MCF 10A (cell line): ENCODE measurements at regions of chr1 and their contacts with region 1.

Region 1: DNA sequence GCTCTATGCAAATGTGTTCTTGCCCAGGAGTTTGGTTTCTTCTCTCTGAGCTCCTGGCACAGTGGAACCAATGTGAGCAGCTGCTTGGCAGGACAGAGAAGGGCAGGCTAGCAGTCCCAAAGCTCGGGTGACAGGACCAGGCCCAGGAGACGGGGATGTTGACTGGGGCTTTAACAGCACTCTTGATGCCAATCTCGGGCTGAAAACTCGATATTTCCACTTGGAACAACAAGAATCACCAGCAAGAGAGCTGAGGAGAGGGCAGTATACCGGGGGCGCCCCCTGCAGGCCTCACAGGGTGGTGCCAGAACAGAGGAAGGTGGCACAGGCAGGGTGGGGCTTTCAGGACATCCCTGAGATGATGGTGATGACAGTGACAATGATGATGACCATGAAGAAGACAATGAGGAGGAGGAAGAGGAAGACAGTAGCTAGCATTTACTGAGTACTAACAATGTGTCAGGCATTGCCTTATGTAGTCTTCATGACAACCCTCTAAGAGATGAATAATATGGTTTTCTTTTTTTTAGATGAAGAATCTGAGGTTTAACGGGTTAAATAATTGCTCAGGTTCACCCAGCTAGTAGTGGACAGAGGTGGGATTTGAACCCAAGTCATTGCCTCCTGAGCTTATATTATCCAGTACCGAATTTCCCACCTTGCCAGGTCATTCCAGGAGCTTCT is 2.7 kb upstream of the KCNJ9 start:
- DNase-seq: peak; percentile 67
- H3K4me3 Mint-ChIP-seq: no peak overlapping the region
- H3K27ac Mint-ChIP-seq: no peak overlapping the region
- H3K4me1 Mint-ChIP-seq: no peaks in the 10 kb centered on the region
- H3K27me3 Mint-ChIP-seq: peaks cover 64% of the 10 kb centered on the region
- CTCF ChIP-seq: peak; percentile 98

Region 2: GRCh38 chr1:159945483-159946241 is 133.0 kb before region 1 on chr1 and contains the start of gene IGSF9:
- CTCF ChIA-PET with region 1: interaction called, 19 read pairs
- POLR2A ChIA-PET with region 1: no interaction called
- intact Hi-C with region 1: no loop called
- DNase-seq: peak; percentile 86
- H3K4me3 Mint-ChIP-seq: peak within 1 kb of the TSS; percentile 69
- H3K27ac Mint-ChIP-seq: no peak within 1 kb of the TSS
- H3K4me1 Mint-ChIP-seq: peaks cover 45% of the 10 kb centered on the region
- H3K27me3 Mint-ChIP-seq: no peaks in the 10 kb centered on the region
- CTCF ChIP-seq: peak; percentile 37
- total RNA-seq, gene IGSF9: 0.25 and 0.44 TPM in 2 replicates

Region 3: GRCh38 chr1:159953536-159954515 is 124.8 kb before region 1 on chr1 and contains the start of gene SLAMF9:
- CTCF ChIA-PET with region 1: interaction called, 11 read pairs
- POLR2A ChIA-PET with region 1: no interaction called
- intact Hi-C with region 1: no loop called
- DNase-seq: peak; percentile 23
- H3K4me3 Mint-ChIP-seq: no peak within 1 kb of the TSS
- H3K27ac Mint-ChIP-seq: no peak within 1 kb of the TSS
- H3K4me1 Mint-ChIP-seq: peaks cover 25% of the 10 kb centered on the region
- H3K27me3 Mint-ChIP-seq: no peaks in the 10 kb centered on the region
- CTCF ChIP-seq: no peak
- total RNA-seq, gene SLAMF9: not detected in 2 replicates

Region 4: DNA sequence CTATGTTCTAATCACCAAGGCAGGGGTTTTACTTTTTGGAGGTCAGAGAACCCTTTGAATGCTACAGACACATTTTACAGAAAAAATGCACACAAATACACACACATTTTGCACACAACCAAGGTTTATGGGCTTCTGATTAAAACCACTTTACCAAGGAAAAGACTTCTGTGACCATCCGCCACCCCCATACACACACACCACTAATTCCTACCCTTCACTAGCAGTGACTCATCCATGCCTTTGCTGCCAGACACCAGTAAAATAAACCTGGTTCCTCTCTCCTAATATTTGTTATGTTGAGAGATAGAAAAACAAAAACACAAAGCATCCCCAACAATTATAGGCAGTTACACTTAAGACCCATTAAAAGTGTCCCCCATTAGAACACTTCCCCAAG is 59.8 kb before region 1 on chr1:
- CTCF ChIA-PET with region 1: interaction called, 17 read pairs
- POLR2A ChIA-PET with region 1: no interaction called
- intact Hi-C with region 1: no loop called
- DNase-seq: peak; percentile 67
- H3K4me3 Mint-ChIP-seq: no peak overlapping the region
- H3K27ac Mint-ChIP-seq: no peak overlapping the region
- H3K4me1 Mint-ChIP-seq: peaks cover 27% of the 10 kb centered on the region
- H3K27me3 Mint-ChIP-seq: no peaks in the 10 kb centered on the region
- CTCF ChIP-seq: no peak

Region 5: GRCh38 chr1:160046494-160047110 is 32.1 kb before region 1 on chr1:
- CTCF ChIA-PET with region 1: interaction called, 1,546 read pairs
- POLR2A ChIA-PET with region 1: interaction called, 8 read pairs
- intact Hi-C with region 1: loop called (anchors 1 kb)
- DNase-seq: peak; percentile 73
- H3K4me3 Mint-ChIP-seq: no peak overlapping the region
- H3K27ac Mint-ChIP-seq: no peak overlapping the region
- H3K4me1 Mint-ChIP-seq: peaks cover 16% of the 10 kb centered on the region
- H3K27me3 Mint-ChIP-seq: peaks cover 63% of the 10 kb centered on the region
- CTCF ChIP-seq: peak; percentile 83